CD4-positive, alpha-beta T cell (primary cell): ENCODE measurements at regions of chr7 and their contacts with region 1.

Region 1: DNA sequence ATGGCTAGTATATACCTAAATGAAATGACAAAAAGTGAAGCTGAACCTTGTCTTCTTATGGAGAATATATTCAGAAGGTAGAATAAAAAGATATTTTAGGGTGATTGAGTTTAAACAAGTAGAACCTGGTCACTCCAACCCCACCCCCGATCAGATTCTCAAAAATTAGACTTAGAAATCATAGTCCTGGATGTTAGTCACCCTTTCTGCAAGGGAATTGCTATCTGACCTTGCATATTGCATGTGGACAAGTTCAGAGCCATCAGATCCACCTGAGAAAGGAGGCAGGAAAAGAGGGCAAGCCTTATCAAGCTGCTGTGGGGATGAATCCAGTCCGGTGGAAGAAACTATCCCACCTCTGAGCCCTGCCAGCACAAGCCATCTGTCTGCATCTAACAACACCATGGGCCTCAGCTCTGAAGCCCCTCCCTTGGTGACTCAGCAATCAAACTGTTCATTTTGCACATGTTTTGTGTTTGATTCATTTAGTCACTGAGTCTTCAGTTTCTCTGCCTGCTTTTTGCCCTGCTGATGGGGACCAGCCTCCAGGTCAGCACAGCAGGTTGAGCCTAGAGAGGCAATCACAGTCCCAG is 727.3 kb downstream of the AUTS2 start:
- DNase-seq: no peak
- ATAC-seq: no peak
- H3K4me3 ChIP-seq: no peak overlapping the region
- H3K4me3 Mint-ChIP-seq: no peak overlapping the region
- H3K27ac ChIP-seq: no peak overlapping the region
- H3K27ac Mint-ChIP-seq: no peak overlapping the region
- H3K4me1 ChIP-seq: no peaks in the 10 kb centered on the region
- H3K4me1 Mint-ChIP-seq: no peaks in the 10 kb centered on the region
- H3K27me3 ChIP-seq: no peaks in the 10 kb centered on the region
- H3K27me3 Mint-ChIP-seq: no peaks in the 10 kb centered on the region
- CTCF ChIP-seq: no peak

Region 2: GRCh38 chr7:69803699-69804516 is 521.7 kb before region 1 on chr7:
- CTCF ChIA-PET with region 1: no interaction called
- POLR2A ChIA-PET with region 1: no interaction called
- intact Hi-C with region 1: no loop called
- DNase-seq: no peak
- ATAC-seq: no peak
- H3K4me3 ChIP-seq: no peak overlapping the region
- H3K4me3 Mint-ChIP-seq: no peak overlapping the region
- H3K27ac ChIP-seq: no peak overlapping the region
- H3K27ac Mint-ChIP-seq: no peak overlapping the region
- H3K4me1 ChIP-seq: no peaks in the 10 kb centered on the region
- H3K4me1 Mint-ChIP-seq: no peaks in the 10 kb centered on the region
- H3K27me3 ChIP-seq: no peaks in the 10 kb centered on the region
- H3K27me3 Mint-ChIP-seq: no peaks in the 10 kb centered on the region
- CTCF ChIP-seq: no peak

Region 3: DNA sequence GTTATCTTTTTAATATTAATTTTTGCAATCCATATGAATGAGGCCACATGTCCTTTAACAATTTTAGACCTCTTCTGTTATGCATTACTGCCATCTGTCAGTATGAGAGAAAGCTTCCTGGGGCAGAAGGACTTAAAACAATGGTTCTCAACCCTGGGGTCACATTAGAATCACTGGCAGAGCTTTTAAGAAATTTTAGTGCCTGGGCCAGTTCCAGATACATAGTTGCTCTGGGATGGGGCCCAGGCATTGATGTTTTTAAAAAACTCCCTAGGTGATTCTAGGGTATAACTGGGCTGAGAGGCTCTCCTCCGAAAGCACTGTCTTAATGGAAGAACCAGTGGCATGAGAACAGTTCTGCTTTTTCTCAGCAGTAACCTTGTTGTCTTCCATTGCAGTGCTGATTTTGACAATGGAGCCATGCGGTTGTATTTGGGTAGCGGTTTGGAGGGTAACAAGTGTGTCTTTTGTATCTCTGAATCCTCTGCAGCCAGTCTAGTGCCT is 500.4 kb before region 1 on chr7:
- CTCF ChIA-PET with region 1: no interaction called
- POLR2A ChIA-PET with region 1: no interaction called
- intact Hi-C with region 1: no loop called
- DNase-seq: peak in 1 of 14 experiments; percentile 2
- ATAC-seq: no peak
- H3K4me3 ChIP-seq: no peak overlapping the region
- H3K4me3 Mint-ChIP-seq: no peak overlapping the region
- H3K27ac ChIP-seq: peak overlapping the region in 1 of 2 donors; percentile 13
- H3K27ac Mint-ChIP-seq: peak overlapping the region; percentile 34
- H3K4me1 ChIP-seq: no peaks in the 10 kb centered on the region
- H3K4me1 Mint-ChIP-seq: peaks cover 23% of the 10 kb centered on the region
- H3K27me3 ChIP-seq: no peaks in the 10 kb centered on the region
- H3K27me3 Mint-ChIP-seq: no peaks in the 10 kb centered on the region
- CTCF ChIP-seq: no peak

Region 4: GRCh38 chr7:70267381-70268120 is 58.1 kb before region 1 on chr7:
- CTCF ChIA-PET with region 1: no interaction called
- POLR2A ChIA-PET with region 1: no interaction called
- intact Hi-C with region 1: loop called in 1 of 2 experiments (anchors 10 kb)
- DNase-seq: no peak
- ATAC-seq: no peak
- H3K4me3 ChIP-seq: no peak overlapping the region
- H3K4me3 Mint-ChIP-seq: no peak overlapping the region
- H3K27ac ChIP-seq: no peak overlapping the region
- H3K27ac Mint-ChIP-seq: no peak overlapping the region
- H3K4me1 ChIP-seq: no peaks in the 10 kb centered on the region
- H3K4me1 Mint-ChIP-seq: no peaks in the 10 kb centered on the region
- H3K27me3 ChIP-seq: no peaks in the 10 kb centered on the region
- H3K27me3 Mint-ChIP-seq: no peaks in the 10 kb centered on the region
- CTCF ChIP-seq: no peak